Activated T-helper 1 cell treated with anti-CD3 and anti-CD28 coated beads, Interleukin-12 subunit alpha, Interleukin-12 subunit beta, Interleukin-2, Interleukin-4 antibody, amounts not matched to agents 30 ng/mL and 10 ng/mL and 1 ng/mL, durations not matched to agents 14 hours and 24 hours and 36 hours (primary cell): ENCODE measurements at regions of chr2 and their contacts with region 1.

Region 1: DNA sequence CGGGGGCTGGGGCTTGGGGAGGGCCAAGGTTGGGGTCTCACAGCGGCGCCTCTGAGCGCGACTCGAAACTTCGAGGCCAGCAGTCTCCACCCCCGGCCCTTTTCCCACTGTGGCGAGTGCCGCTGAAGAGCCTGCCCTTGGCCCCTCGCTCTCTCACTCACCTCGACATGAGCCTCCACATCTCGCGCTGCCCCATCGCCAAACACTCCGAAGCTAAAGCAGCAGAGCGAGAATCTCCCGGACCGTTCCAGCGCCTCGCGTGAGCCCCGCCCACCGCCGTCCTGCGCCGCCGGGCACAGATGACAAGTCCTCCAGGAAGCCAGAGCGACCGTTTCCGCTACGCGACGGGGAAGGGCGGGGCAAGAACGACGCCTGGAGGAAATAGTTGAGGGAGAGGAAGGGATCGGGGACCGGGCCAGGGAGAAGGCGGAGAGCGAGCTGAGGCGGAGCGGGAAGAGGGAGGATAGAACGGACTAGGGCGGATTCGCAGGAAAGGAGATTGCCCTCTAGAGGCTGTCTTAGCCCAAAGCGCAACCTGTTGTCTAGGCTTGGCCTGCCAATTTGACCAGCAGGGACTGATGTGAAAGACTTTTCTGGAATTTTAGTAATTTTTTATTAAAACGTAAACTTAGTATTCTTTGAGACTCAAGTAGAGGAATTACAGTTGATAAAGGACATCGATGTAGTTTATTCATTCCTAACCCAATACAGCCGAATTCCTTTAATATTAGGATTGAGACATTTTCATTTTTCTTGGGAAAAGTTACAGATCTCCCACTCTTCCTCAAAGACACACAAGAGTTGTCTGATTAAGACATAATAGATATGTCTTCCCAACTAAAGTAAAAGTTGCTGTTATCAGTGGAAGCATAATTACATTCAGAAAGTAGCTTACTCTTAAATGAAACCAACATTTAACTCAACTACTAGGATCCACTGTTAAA is at the start of gene HIBCH:
- DNase-seq: peak; percentile 84
- H3K4me3 Mint-ChIP-seq: peak within 1 kb of the TSS; percentile 90
- H3K27ac Mint-ChIP-seq: peak within 1 kb of the TSS; percentile 91
- H3K4me1 Mint-ChIP-seq: peaks cover 47% of the 10 kb centered on the region
- H3K27me3 Mint-ChIP-seq: no peaks in the 10 kb centered on the region
- total RNA-seq, gene HIBCH: 24.6 and 27.1 TPM in 2 replicates

Region 2: GRCh38 chr2:189762551-189763298 is 557.1 kb before region 1 on chr2 and contains the start of gene OSGEPL1:
- intact Hi-C with region 1: loop called (anchors 2 kb)
- DNase-seq: peak; percentile 88
- H3K4me3 Mint-ChIP-seq: peak within 1 kb of the TSS; percentile 92
- H3K27ac Mint-ChIP-seq: peak within 1 kb of the TSS; percentile 99
- H3K4me1 Mint-ChIP-seq: peaks cover 14% of the 10 kb centered on the region
- H3K27me3 Mint-ChIP-seq: no peaks in the 10 kb centered on the region
- total RNA-seq, gene OSGEPL1: 8.3 and 11.4 TPM in 2 replicates

Region 3: GRCh38 chr2:190343500-190344275 is 23.9 kb after region 1 on chr2 and contains the start of gene INPP1:
- intact Hi-C with region 1: loop called (anchors 1 kb)
- DNase-seq: peak; percentile 29
- H3K4me3 Mint-ChIP-seq: peak within 1 kb of the TSS; percentile 87
- H3K27ac Mint-ChIP-seq: peak within 1 kb of the TSS; percentile 88
- H3K4me1 Mint-ChIP-seq: peaks cover 27% of the 10 kb centered on the region
- H3K27me3 Mint-ChIP-seq: peaks cover 17% of the 10 kb centered on the region
- total RNA-seq, gene INPP1: 7.7 and 9.8 TPM in 2 replicates

Region 4: DNA sequence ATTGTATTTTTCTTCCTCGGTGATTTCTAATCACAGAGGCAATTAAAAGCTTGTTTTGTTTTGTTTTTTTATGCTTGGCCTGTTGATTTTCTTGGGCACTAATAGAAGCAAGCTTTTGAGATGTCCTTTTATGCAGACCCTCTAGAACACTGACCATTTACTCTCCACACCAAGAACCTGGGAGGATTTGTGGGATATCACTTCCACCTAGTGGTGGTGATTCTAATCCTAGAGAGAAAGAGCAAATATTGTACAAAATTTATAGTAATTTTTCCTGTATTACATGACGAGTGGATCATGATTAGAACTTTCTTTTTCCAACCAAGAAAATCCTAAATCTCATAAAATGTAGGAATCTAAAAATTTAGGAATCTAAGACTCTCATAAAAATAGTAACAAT is 191.3 kb after region 1 on chr2:
- intact Hi-C with region 1: loop called (anchors 5 kb)
- DNase-seq: no peak
- H3K4me3 Mint-ChIP-seq: no peak overlapping the region
- H3K27ac Mint-ChIP-seq: no peak overlapping the region
- H3K4me1 Mint-ChIP-seq: peaks cover 29% of the 10 kb centered on the region
- H3K27me3 Mint-ChIP-seq: no peaks in the 10 kb centered on the region

Region 5: GRCh38 chr2:190679813-190680591 is 360.2 kb after region 1 on chr2:
- intact Hi-C with region 1: loop called (anchors 2 kb)
- DNase-seq: peak; percentile 27
- H3K4me3 Mint-ChIP-seq: peak overlapping the region; percentile 69
- H3K27ac Mint-ChIP-seq: peak overlapping the region; percentile 87
- H3K4me1 Mint-ChIP-seq: peaks cover 53% of the 10 kb centered on the region
- H3K27me3 Mint-ChIP-seq: no peaks in the 10 kb centered on the region

Region 6: DNA sequence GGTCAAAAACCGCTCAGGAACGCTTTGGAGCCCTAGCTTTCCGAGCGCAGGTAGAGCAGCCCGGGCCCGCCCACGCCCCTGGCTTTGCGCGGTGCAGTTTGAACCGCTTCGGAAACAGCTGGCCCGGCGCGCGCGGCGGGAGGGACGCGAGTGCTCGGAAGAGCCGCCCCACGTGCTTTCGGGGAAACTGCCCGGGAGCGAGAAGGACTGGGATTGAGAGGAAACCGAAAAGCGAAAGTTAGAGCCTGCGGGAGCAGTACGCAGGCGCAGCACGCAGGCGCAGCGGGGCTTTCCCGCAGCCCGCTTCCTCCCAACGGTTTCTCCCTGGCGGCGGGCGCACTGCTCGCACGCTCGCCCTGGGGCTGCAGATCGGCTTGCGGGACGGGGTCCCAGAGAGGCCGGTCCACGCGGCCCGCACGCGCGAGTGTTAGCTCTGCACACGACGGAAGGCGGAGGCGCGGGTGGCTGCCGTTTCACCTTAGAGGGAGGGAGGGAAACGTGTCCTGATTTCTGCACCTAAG is 700.5 kb after region 1 on chr2:
- intact Hi-C with region 1: loop called (anchors 10 kb)
- DNase-seq: peak; percentile 96
- H3K4me3 Mint-ChIP-seq: no peak overlapping the region
- H3K27ac Mint-ChIP-seq: no peak overlapping the region
- H3K4me1 Mint-ChIP-seq: peaks cover 45% of the 10 kb centered on the region
- H3K27me3 Mint-ChIP-seq: peaks cover 2% of the 10 kb centered on the region